ENCODE measurements at regions of chr16 and their contacts with region 1.

Region 1: GRCh38 chr16:67466581-67466980 is 14.4 kb downstream of the ATP6V0D1 start:
- H3K4me3 Mint-ChIP-seq: no peak overlapping the region
- H3K27ac Mint-ChIP-seq: no peak overlapping the region
- H3K4me1 Mint-ChIP-seq: peaks cover 91% of the 10 kb centered on the region
- H3K27me3 Mint-ChIP-seq: no peaks in the 10 kb centered on the region

Region 2: GRCh38 chr16:67104061-67104460 is 362.5 kb before region 1 on chr16:
- intact Hi-C with region 1: no loop called
- H3K4me3 Mint-ChIP-seq: no peak overlapping the region
- H3K27ac Mint-ChIP-seq: peak overlapping the region; percentile 60
- H3K4me1 Mint-ChIP-seq: peaks cover 31% of the 10 kb centered on the region
- H3K27me3 Mint-ChIP-seq: no peaks in the 10 kb centered on the region

Region 3: GRCh38 chr16:67428146-67428731 is 38.3 kb before region 1 on chr16:
- intact Hi-C with region 1: loop called (anchors 1 kb)
- H3K4me3 Mint-ChIP-seq: no peak overlapping the region
- H3K27ac Mint-ChIP-seq: no peak overlapping the region
- H3K4me1 Mint-ChIP-seq: peaks cover 27% of the 10 kb centered on the region
- H3K27me3 Mint-ChIP-seq: peaks cover 80% of the 10 kb centered on the region

Region 4: GRCh38 chr16:67806428-67807147 is 340.0 kb after region 1 on chr16 and contains the starts of genes RANBP10 and TSNAXIP1:
- intact Hi-C with region 1: no loop called
- H3K4me3 Mint-ChIP-seq: peak within 1 kb of the TSS; percentile 94
- H3K27ac Mint-ChIP-seq: peak within 1 kb of the TSS; percentile 88
- H3K4me1 Mint-ChIP-seq: peaks cover 30% of the 10 kb centered on the region
- H3K27me3 Mint-ChIP-seq: peaks cover 2% of the 10 kb centered on the region